ENCODE measurements at regions of chr15 and their contacts with region 1.

Region 1: GRCh38 chr15:57340682-57341259 is 35.5 kb upstream of the CGNL1 start:
- DNase-seq: no peak
- ATAC-seq: peak; percentile 64 to 87 (median 74)
- H3K4me3 ChIP-seq: no peak overlapping the region
- H3K27ac ChIP-seq: no peak overlapping the region
- H3K4me1 ChIP-seq: no peaks in the 10 kb centered on the region
- H3K27me3 ChIP-seq: no peaks in the 10 kb centered on the region
- CTCF ChIP-seq: peak; percentile 91

Region 2: DNA sequence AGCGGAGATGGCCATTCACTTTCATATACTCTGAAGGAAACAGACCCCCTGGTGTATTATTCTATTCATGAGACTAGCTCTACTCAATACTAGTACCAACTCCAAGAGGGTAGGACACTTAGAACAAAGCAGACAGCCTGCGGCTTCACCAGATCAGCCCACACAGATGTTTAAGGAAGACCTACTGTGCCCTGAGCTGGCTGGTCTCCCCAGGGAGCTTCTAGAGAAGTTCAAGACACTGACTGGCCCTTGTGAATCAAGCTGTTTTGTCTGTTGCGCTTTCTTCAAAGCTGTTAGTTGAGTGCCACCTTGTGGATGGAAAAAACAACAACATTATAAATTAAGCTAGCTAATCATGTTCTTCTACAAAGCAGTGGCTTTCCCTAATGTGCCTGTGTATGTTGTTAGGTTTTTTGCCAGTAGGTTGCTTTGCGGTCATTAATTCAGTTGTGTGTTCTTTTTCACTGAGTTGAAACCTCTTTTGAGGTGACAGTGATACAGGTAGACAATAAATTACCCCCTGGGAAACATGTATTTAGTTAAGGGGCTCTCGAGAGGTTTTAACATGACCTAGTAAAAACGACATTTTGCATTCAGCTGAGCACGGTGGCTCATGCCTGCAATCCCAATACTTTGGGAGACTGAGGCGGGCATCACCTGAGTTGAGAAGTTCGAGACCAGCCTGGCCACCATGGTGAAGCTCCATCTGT is 186.8 kb after region 1 on chr15:
- intact Hi-C with region 1: loop called (anchors 1 to 5 kb)
- DNase-seq: no peak
- ATAC-seq: peak; percentile 70 to 88 (median 75)
- H3K4me3 ChIP-seq: no peak overlapping the region
- H3K27ac ChIP-seq: no peak overlapping the region
- H3K4me1 ChIP-seq: no peaks in the 10 kb centered on the region
- H3K27me3 ChIP-seq: no peaks in the 10 kb centered on the region
- CTCF ChIP-seq: peak; percentile 71